Naive thymus-derived CD4-positive, alpha-beta T cell (primary cell): ENCODE measurements at regions of chr1 and their contacts with region 1.

Region 1: GRCh38 chr1:198937231-198938031 is 298.6 kb downstream of the PTPRC start:
- DNase-seq: peak in 8 of 9 donors; percentile 52 to 81 (median 72)
- ATAC-seq: peak; percentile 92
- H3K4me3 ChIP-seq: peak overlapping the region; percentile 47
- H3K4me3 Mint-ChIP-seq: peak overlapping the region in 3 of 10 donors; percentile 88 to 97 (median 92)
- H3K27ac ChIP-seq: peak overlapping the region; percentile 75
- H3K27ac Mint-ChIP-seq: peak overlapping the region in 7 of 9 donors; percentile 88 to 97 (median 92)
- H3K4me1 ChIP-seq: peaks cover 16 to 23% of the 10 kb centered on the region in 2 donors
- H3K4me1 Mint-ChIP-seq: peaks cover 6 to 28% (median 22%) of the 10 kb centered on the region in 7 donors
- H3K27me3 ChIP-seq: no peaks in the 10 kb centered on the region
- H3K27me3 Mint-ChIP-seq: no peaks in the 10 kb centered on the region

Region 2: DNA sequence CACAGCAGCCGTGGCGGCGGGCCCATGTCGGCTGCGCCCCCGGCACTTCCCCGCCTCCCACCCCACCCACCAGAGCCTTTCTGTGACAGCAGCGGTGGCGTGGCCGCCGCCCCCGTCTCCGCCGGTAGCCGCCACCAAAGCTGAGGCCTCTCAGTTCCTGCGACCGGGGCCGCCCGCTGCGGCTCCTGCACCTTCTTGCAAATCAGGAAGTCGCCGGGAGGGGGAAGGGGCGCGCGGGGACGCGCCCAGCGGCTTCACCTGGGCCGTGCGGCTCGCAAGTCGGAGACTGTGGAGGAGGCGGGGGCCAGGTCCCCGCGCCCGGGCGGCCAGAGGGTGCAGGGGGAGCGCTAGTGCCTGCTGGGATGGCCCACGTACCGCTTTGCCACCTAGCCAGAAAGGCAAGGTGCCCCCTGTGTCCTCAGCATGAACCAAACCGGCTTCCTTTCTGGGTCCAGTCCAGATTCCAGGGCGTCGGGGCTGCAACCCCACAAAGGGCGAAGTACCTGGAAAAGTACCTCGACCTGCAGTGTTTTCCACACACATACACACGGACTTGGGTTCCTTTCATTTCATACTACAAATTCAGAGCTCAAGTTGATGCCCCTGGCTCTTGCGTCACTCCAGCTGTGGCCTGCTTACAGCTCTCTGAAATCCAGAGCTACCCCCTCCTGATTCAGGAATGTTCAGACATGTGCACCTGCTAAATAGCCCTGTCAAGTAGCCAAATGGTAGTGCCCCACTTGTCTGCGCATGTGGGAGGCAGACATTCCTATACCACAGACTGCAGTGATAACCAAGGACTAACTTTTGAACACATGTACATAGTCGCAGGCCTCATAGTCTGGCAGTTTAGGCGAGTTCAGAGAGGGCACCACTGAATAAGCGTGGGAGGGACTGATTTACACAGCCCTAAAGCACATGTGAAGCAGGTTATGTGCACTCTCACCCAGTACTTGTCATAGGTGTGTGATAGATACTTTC is 1161.9 kb before region 1 on chr1 and contains the start of gene DENND1B:
- CTCF ChIA-PET with region 1: no interaction called
- POLR2A ChIA-PET with region 1: no interaction called
- intact Hi-C with region 1: loop called (anchors 5 to 10 kb)
- DNase-seq: peak; percentile 64 to 83 (median 81)
- ATAC-seq: peak; percentile 80
- H3K4me3 ChIP-seq: peak within 1 kb of the TSS; percentile 68
- H3K4me3 Mint-ChIP-seq: peak within 1 kb of the TSS; percentile 87 to 98 (median 92)
- H3K27ac ChIP-seq: peak within 1 kb of the TSS; percentile 74
- H3K27ac Mint-ChIP-seq: peak within 1 kb of the TSS; percentile 90 to 98 (median 97)
- H3K4me1 ChIP-seq: peaks cover 19 to 34% of the 10 kb centered on the region in 2 donors
- H3K4me1 Mint-ChIP-seq: peaks cover 32 to 72% (median 62%) of the 10 kb centered on the region in 7 donors
- H3K27me3 ChIP-seq: no peaks in the 10 kb centered on the region
- H3K27me3 Mint-ChIP-seq: no peaks in the 10 kb centered on the region
- total RNA-seq, gene DENND1B: 14.2 to 28.7 (median 23.2) TPM

Region 3: DNA sequence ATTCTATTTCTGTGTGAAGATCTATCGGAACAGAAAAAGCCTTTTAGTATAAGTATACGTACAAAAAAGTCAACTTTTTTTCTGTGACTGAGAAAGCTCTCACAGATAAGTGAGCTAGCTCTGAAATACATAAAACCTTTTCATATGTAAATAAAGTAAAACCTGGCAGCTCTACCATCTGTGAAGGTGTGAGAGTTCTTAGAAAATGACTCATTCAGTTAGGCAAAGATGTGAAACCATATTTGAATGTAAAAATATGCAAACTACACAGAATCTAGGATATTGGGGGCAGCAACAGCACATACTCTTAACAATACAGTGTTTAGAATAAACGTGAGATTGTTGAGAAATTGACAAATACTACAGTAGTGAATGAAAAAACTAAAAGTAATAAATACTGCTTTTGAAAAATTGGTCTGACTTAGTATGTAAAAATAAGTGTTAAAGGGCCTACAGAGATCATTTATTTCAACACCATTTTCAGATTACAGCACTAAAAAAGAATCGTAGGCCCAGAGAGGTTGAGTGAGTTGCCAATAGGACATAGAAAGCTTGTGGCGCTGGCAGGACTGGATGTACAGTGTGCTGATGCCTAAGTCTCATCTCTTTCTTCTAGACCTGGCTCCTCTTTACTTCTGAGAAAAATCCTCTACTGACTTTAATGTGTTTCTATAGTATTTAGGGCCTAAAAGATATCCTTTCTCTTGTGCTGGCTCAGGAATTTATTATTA is 416.7 kb before region 1 on chr1:
- CTCF ChIA-PET with region 1: no interaction called
- POLR2A ChIA-PET with region 1: no interaction called
- intact Hi-C with region 1: loop called in 1 of 2 experiments (anchors 1 kb)
- DNase-seq: peak in 3 of 9 donors; percentile 11 to 27 (median 18)
- ATAC-seq: peak; percentile 66
- H3K4me3 ChIP-seq: peak overlapping the region; percentile 44
- H3K4me3 Mint-ChIP-seq: peak overlapping the region; percentile 65 to 79 (median 71)
- H3K27ac ChIP-seq: peak overlapping the region; percentile 81
- H3K27ac Mint-ChIP-seq: peak overlapping the region; percentile 48 to 95 (median 93)
- H3K4me1 ChIP-seq: peaks cover 40 to 48% of the 10 kb centered on the region in 2 donors
- H3K4me1 Mint-ChIP-seq: peaks cover 30 to 77% (median 69%) of the 10 kb centered on the region in 7 donors
- H3K27me3 ChIP-seq: no peaks in the 10 kb centered on the region
- H3K27me3 Mint-ChIP-seq: no peaks in the 10 kb centered on the region

Region 4: DNA sequence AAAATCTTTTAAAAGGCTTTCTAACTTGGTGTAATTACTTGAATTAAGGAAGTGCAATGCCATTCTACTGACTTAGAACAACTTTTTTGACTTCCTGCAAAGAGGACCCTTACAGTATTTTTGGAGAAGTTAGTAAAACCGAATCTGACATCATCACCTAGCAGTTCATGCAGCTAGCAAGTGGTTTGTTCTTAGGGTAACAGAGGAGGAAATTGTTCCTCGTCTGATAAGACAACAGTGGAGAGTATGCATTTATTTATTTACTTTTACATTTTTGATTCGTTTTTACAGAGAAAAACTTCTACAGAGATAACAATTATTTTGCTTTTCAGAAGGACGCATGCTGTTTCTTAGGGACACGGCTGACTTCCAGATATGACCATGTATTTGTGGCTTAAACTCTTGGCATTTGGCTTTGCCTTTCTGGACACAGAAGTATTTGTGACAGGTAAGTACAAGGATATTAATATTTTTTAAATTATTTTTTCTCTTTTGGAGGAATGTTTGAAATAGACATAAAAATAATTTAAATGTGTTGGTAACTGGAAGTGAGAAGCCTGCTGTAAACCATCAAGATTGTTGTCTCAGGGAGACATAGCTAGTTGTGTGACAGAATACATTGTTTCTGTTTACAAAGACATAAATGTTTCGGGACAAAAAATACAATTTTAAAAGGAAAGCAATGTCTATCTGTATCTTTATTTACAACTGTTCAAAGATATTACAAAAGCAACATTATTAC is 298.4 kb before region 1 on chr1 and contains the start of gene PTPRC:
- CTCF ChIA-PET with region 1: no interaction called
- POLR2A ChIA-PET with region 1: no interaction called
- intact Hi-C with region 1: loop called in 1 of 2 experiments (anchors 5 kb)
- DNase-seq: peak in 7 of 9 donors; percentile 46 to 78 (median 68)
- ATAC-seq: peak; percentile 81
- H3K4me3 ChIP-seq: peak within 1 kb of the TSS; percentile 81
- H3K4me3 Mint-ChIP-seq: peak within 1 kb of the TSS; percentile 77 to 100 (median 92)
- H3K27ac ChIP-seq: peak within 1 kb of the TSS; percentile 94
- H3K27ac Mint-ChIP-seq: peak within 1 kb of the TSS; percentile 86 to 98 (median 96)
- H3K4me1 ChIP-seq: peaks cover 31 to 40% of the 10 kb centered on the region in 2 donors
- H3K4me1 Mint-ChIP-seq: peaks cover 39 to 60% (median 52%) of the 10 kb centered on the region in 7 donors
- H3K27me3 ChIP-seq: no peaks in the 10 kb centered on the region
- H3K27me3 Mint-ChIP-seq: no peaks in the 10 kb centered on the region
- total RNA-seq, gene PTPRC: 739 to 1,121 (median 1,015) TPM

Region 5: GRCh38 chr1:198726455-198726854 is 211.0 kb before region 1 on chr1:
- CTCF ChIA-PET with region 1: no interaction called
- POLR2A ChIA-PET with region 1: no interaction called
- intact Hi-C with region 1: no loop called
- DNase-seq: no peak
- ATAC-seq: no peak
- H3K4me3 ChIP-seq: no peak overlapping the region
- H3K4me3 Mint-ChIP-seq: peak overlapping the region in 1 of 10 donors; percentile 14
- H3K27ac ChIP-seq: no peak overlapping the region
- H3K27ac Mint-ChIP-seq: peak overlapping the region in 8 of 9 donors; percentile 59 to 89 (median 82)
- H3K4me1 ChIP-seq: peaks cover 28 to 32% of the 10 kb centered on the region in 2 donors
- H3K4me1 Mint-ChIP-seq: peaks cover 26 to 84% (median 69%) of the 10 kb centered on the region in 7 donors
- H3K27me3 ChIP-seq: no peaks in the 10 kb centered on the region
- H3K27me3 Mint-ChIP-seq: no peaks in the 10 kb centered on the region

Region 6: GRCh38 chr1:198873696-198874230 is 63.7 kb before region 1 on chr1:
- CTCF ChIA-PET with region 1: no interaction called
- POLR2A ChIA-PET with region 1: no interaction called
- intact Hi-C with region 1: no loop called
- DNase-seq: no peak
- ATAC-seq: no peak
- H3K4me3 ChIP-seq: no peak overlapping the region
- H3K4me3 Mint-ChIP-seq: no peak overlapping the region
- H3K27ac ChIP-seq: no peak overlapping the region
- H3K27ac Mint-ChIP-seq: peak overlapping the region in 1 of 9 donors; percentile 69
- H3K4me1 ChIP-seq: no peaks in the 10 kb centered on the region
- H3K4me1 Mint-ChIP-seq: peaks cover 0 to 26% (median 6%) of the 10 kb centered on the region in 7 donors
- H3K27me3 ChIP-seq: no peaks in the 10 kb centered on the region
- H3K27me3 Mint-ChIP-seq: no peaks in the 10 kb centered on the region

Region 7: DNA sequence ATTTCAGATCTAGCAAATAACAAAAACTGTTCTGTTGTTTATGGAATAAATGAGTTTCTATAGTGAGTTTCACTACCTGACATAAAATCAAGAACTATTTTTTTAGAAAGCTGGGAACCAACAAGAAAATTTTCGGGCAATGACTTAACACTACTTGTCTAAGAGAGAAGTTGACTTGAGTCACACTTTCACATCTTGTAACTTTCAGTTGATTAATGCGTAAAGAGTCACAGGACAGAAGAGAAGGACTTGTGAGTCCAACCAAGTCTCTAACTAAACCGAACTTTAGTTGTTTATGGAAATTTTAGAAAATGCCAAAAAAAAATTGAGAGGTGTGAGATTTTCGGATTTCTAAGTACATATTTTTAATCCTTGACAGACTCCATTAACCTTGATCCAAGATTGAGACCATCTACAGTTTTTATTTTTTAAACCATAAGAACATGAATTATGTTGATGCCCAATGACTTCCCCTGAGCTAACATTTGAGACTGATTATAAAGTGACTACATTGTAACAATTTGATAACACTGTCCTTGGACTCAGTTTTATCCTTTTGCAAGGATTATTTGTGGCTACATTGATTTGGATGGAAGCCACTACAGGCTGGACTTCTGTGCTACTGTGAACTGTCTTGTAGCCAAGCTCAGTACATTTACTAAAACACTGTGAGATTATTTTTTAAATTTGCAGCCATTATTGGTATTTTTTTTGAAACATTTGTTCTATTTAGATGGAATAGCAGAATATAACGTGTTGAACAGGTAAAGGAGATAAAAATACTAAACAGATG is 14.6 kb before region 1 on chr1:
- CTCF ChIA-PET with region 1: interaction called, 4 read pairs
- POLR2A ChIA-PET with region 1: interaction called, 17 read pairs
- intact Hi-C with region 1: loop called (anchors 1 to 2 kb)
- DNase-seq: no peak
- ATAC-seq: peak; percentile 68
- H3K4me3 ChIP-seq: no peak overlapping the region
- H3K4me3 Mint-ChIP-seq: peak overlapping the region in 2 of 10 donors; percentile 18 to 68
- H3K27ac ChIP-seq: no peak overlapping the region
- H3K27ac Mint-ChIP-seq: peak overlapping the region in 4 of 9 donors; percentile 14 to 81 (median 60)
- H3K4me1 ChIP-seq: peaks cover 0 to 22% of the 10 kb centered on the region in 2 donors
- H3K4me1 Mint-ChIP-seq: peaks cover 30 to 90% (median 75%) of the 10 kb centered on the region in 7 donors
- H3K27me3 ChIP-seq: no peaks in the 10 kb centered on the region
- H3K27me3 Mint-ChIP-seq: no peaks in the 10 kb centered on the region

Region 8: DNA sequence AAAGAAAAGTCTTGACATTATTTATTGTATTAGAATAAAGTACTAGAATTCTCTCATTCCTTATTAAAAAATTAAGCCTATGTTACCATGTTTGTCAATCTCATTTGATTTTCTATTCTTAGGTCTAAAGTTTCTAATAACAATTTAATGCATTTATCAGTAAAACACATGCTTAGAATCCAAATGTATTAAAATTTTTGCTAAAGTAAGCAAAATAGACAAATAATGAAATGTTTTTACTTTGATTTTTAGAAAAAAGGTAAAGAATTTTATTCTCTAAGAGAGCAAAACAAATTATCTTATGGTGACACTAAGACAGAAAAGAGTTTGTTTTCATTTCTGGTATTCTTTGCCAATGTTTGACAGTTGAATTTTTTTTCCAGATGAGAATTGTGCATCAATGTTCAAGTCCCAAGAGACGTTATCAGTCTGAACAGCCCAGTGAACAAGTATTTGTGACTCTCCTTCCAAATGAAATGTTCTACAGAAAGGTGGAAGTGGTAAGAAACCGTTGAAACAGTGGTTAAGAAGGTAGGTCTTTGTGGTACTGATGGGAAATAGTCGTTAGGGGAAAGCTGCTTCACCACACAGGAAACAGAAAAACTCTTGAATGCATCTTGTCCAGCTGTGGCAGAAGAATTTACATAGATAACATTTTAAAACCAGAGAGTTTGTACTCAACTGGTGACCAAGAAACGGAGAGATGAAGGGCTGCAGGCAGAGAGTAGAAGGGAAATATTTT is 103.9 kb after region 1 on chr1:
- CTCF ChIA-PET with region 1: no interaction called
- POLR2A ChIA-PET with region 1: interaction called, 4 read pairs
- intact Hi-C with region 1: loop called in 1 of 2 experiments (anchors 1 kb)
- DNase-seq: peak in 7 of 9 donors; percentile 1 to 47 (median 28)
- ATAC-seq: peak; percentile 67
- H3K4me3 ChIP-seq: no peak overlapping the region
- H3K4me3 Mint-ChIP-seq: peak overlapping the region in 9 of 10 donors; percentile 5 to 81 (median 58)
- H3K27ac ChIP-seq: no peak overlapping the region
- H3K27ac Mint-ChIP-seq: peak overlapping the region in 4 of 9 donors; percentile 8 to 74 (median 61)
- H3K4me1 ChIP-seq: peaks cover 20 to 22% of the 10 kb centered on the region in 2 donors
- H3K4me1 Mint-ChIP-seq: peaks cover 20 to 54% (median 33%) of the 10 kb centered on the region in 7 donors
- H3K27me3 ChIP-seq: no peaks in the 10 kb centered on the region
- H3K27me3 Mint-ChIP-seq: peaks cover 0 to 2% (median 0%) of the 10 kb centered on the region in 5 donors

Region 9: GRCh38 chr1:199173356-199173755 is 235.9 kb after region 1 on chr1:
- CTCF ChIA-PET with region 1: no interaction called
- POLR2A ChIA-PET with region 1: interaction called, 3 read pairs
- intact Hi-C with region 1: loop called in 1 of 2 experiments (anchors 1 kb)
- DNase-seq: peak in 7 of 9 donors; percentile 9 to 56 (median 25)
- ATAC-seq: peak; percentile 90
- H3K4me3 ChIP-seq: no peak overlapping the region
- H3K4me3 Mint-ChIP-seq: peak overlapping the region in 7 of 10 donors; percentile 8 to 55 (median 32)
- H3K27ac ChIP-seq: no peak overlapping the region
- H3K27ac Mint-ChIP-seq: peak overlapping the region in 8 of 9 donors; percentile 4 to 73 (median 44)
- H3K4me1 ChIP-seq: peaks cover 23 to 48% of the 10 kb centered on the region in 2 donors
- H3K4me1 Mint-ChIP-seq: peaks cover 28 to 56% (median 43%) of the 10 kb centered on the region in 7 donors
- H3K27me3 ChIP-seq: no peaks in the 10 kb centered on the region
- H3K27me3 Mint-ChIP-seq: peaks cover 0 to 14% (median 0%) of the 10 kb centered on the region in 5 donors